Breast epithelium (tissue), 4 donors: ENCODE measurements at regions of chr13 and their contacts with region 1.

Region 1: GRCh38 chr13:83117046-83117445 is 765.2 kb downstream of the SLITRK1 start:
- DNase-seq: no peak
- H3K4me3 ChIP-seq: no peak overlapping the region
- H3K27ac ChIP-seq: no peak overlapping the region
- H3K4me1 ChIP-seq: no peaks in the 10 kb centered on the region
- H3K27me3 ChIP-seq: no peaks in the 10 kb centered on the region
- CTCF ChIP-seq: no peak
- POLR2A ChIP-seq: no peak

Region 2: GRCh38 chr13:83829810-83830209 is 712.8 kb after region 1 on chr13:
- intact Hi-C with region 1: loop called (anchors 5 kb)
- DNase-seq: no peak
- H3K4me3 ChIP-seq: no peak overlapping the region
- H3K27ac ChIP-seq: no peak overlapping the region
- H3K4me1 ChIP-seq: no peaks in the 10 kb centered on the region
- H3K27me3 ChIP-seq: no peaks in the 10 kb centered on the region
- CTCF ChIP-seq: no peak
- POLR2A ChIP-seq: no peak